HepG2 (cell line): ENCODE measurements at regions of chr5 and their contacts with region 1.

Region 1: DNA sequence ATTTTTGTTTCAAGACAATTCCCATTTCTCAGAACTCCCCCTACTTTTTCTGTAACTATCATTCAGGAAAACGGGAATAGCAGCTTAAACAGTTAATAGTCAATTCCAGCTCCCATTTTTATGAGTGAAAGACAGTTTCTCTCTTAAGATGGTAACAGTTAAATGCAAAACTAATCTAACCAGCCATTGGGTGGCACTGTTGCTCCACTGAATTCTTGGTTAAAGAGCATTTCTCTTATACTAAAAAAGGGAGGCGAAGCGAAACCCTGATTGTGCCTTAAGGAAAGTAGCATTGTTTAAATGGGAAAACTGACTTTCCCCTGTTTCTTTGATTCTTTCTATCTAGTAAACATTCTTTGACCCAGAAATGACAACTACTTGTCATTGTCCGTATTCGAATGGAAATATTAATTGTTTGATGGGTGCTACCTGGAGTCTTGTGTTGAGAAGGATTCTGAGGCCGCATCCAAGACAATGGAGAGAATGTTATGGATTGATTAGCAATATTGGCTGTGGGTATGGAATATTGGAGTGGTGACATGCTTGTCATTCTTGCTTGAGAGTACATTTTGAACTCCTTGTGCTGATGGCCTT is 507.8 kb downstream of the MAT2B start:
- DNase-seq: peak; percentile 45
- ATAC-seq: peak; percentile 68; the same call in 2 of the 3 replicates
- H3K4me3 ChIP-seq: no peak overlapping the region
- H3K27ac ChIP-seq: no peak overlapping the region
- H3K4me1 ChIP-seq: no peaks in the 10 kb centered on the region
- H3K27me3 ChIP-seq: no peaks in the 10 kb centered on the region
- CTCF ChIP-seq: peak; percentile 73
- EP300 ChIP-seq: no peak
- POLR2A ChIP-seq: no peak
- RAD21 ChIP-seq: 0 out of 2 replicates have a peak, but pooled peaks have one; percentile 29

Region 2: DNA sequence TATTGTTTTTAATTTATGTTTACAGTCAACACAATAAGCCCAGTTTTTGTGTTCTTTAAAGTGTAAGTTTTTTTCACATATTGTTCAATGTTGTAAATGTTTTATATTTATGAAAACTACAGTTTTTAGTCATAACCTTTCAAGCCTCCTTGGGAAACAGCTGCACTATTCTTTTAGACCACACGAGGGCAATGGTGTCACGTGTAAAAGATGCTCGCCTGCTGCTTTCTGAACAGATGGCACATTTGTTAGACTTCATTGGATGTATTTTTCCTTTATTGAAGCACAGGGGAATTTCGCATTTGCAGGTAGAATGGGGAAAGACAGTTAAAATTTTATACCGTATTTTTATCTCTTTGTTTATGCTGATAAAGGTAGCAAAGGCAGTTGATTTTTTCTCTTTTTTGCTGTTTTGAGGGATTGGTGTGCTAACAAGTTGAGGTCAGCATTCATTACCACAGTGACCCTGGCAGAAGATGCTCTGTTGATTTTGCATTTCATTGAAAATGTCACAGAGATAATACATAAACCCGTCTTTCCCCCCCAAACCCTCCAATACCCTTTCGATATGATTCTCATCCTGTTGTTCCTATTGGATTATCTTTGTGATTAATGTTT is 448.7 kb before region 1 on chr5:
- CTCF ChIA-PET with region 1: no interaction called
- POLR2A ChIA-PET with region 1: no interaction called
- in situ Hi-C with region 1: loop called (anchors 10 kb)
- intact Hi-C with region 1: loop called (anchors 1 kb)
- DNase-seq: peak; percentile 50
- ATAC-seq: no peak
- H3K4me3 ChIP-seq: no peak overlapping the region
- H3K27ac ChIP-seq: no peak overlapping the region
- H3K4me1 ChIP-seq: peaks cover 32% of the 10 kb centered on the region
- H3K27me3 ChIP-seq: peaks cover 0 to 11% of the 10 kb centered on the region in 2 experiments; a peak in 1 of 5 replicates
- CTCF ChIP-seq: peak; percentile 83
- EP300 ChIP-seq: no peak
- POLR2A ChIP-seq: no peak
- RAD21 ChIP-seq: peak; percentile 49; the same call in 1 of the 2 replicates

Region 3: GRCh38 chr5:163967268-163967667 is 45.9 kb before region 1 on chr5:
- CTCF ChIA-PET with region 1: no interaction called
- POLR2A ChIA-PET with region 1: no interaction called
- in situ Hi-C with region 1: no loop called
- intact Hi-C with region 1: no loop called
- DNase-seq: no peak
- ATAC-seq: no peak
- H3K4me3 ChIP-seq: no peak overlapping the region
- H3K27ac ChIP-seq: no peak overlapping the region
- H3K4me1 ChIP-seq: no peaks in the 10 kb centered on the region
- H3K27me3 ChIP-seq: no peaks in the 10 kb centered on the region
- CTCF ChIP-seq: no peak
- EP300 ChIP-seq: no peak
- POLR2A ChIP-seq: no peak
- RAD21 ChIP-seq: no peak

Region 4: DNA sequence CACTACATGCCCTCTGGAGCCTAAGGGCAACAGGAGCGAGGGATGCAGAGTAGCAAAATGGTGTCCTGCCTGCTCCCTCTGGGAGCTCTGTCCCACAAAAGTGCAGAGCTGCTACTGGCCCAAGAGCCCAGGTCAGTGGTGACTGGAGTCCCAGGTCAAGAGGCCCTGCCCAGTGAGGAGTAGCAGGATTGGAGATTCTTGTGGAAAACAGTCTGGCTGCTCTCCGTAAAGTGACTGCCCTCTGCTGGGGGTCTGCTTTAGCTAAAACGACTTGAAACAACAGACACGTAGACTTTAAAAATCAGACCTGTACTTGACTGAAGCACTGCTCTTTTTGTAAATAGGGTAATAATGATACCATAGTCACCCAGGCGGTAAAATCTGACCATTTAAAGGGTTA is 409.2 kb after region 1 on chr5:
- CTCF ChIA-PET with region 1: no interaction called
- POLR2A ChIA-PET with region 1: no interaction called
- in situ Hi-C with region 1: no loop called
- intact Hi-C with region 1: loop called (anchors 1 kb)
- DNase-seq: peak; percentile 22
- ATAC-seq: no peak; the same call in 2 of the 3 replicates
- H3K4me3 ChIP-seq: no peak overlapping the region
- H3K27ac ChIP-seq: no peak overlapping the region
- H3K4me1 ChIP-seq: no peaks in the 10 kb centered on the region
- H3K27me3 ChIP-seq: no peaks in the 10 kb centered on the region
- CTCF ChIP-seq: no peak
- EP300 ChIP-seq: no peak
- POLR2A ChIP-seq: no peak
- RAD21 ChIP-seq: no peak

Region 5: DNA sequence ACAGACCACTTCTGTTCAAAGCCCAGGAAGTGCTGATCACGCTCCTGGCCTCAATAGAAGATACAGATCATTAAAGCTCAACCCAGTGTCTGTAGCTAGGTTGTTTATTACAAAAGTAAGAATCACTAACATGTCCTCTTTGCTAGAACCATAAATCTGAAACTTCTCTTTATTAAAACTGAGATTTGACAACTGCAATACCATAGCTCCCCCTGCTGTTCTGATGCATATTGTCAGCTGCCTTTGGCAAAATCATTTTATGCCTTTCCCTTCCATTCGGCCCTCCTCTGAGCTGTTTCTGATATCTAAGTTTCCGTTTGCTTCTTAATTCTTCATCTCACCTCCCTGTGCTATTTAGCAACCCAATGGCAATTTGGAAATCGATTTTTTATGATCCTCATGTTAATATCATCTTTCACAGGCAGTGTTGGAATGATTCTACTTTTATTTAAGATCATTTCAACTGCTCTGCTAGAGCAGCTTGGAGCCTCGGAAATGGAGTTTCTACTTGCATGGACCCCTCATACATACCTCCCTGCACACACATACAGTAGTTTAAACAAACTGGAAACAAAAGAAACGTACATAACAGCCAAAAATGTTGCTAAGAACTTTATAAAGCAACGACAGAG is 491.1 kb after region 1 on chr5:
- CTCF ChIA-PET with region 1: interaction called, 19 read pairs
- POLR2A ChIA-PET with region 1: no interaction called
- in situ Hi-C with region 1: loop called (anchors 25 kb)
- intact Hi-C with region 1: no loop called
- DNase-seq: peak; percentile 34
- ATAC-seq: peak; percentile 47; the same call in 1 of the 3 replicates
- H3K4me3 ChIP-seq: no peak overlapping the region
- H3K27ac ChIP-seq: no peak overlapping the region
- H3K4me1 ChIP-seq: no peaks in the 10 kb centered on the region
- H3K27me3 ChIP-seq: no peaks in the 10 kb centered on the region
- CTCF ChIP-seq: peak; percentile 72
- EP300 ChIP-seq: no peak
- POLR2A ChIP-seq: no peak
- RAD21 ChIP-seq: 0 out of 2 replicates have a peak, but pooled peaks have one; percentile 32

Region 6: GRCh38 chr5:164610374-164610773 is 597.2 kb after region 1 on chr5:
- CTCF ChIA-PET with region 1: no interaction called
- POLR2A ChIA-PET with region 1: no interaction called
- in situ Hi-C with region 1: no loop called
- intact Hi-C with region 1: no loop called
- DNase-seq: no peak
- ATAC-seq: no peak
- H3K4me3 ChIP-seq: no peak overlapping the region
- H3K27ac ChIP-seq: no peak overlapping the region
- H3K4me1 ChIP-seq: no peaks in the 10 kb centered on the region
- H3K27me3 ChIP-seq: no peaks in the 10 kb centered on the region
- CTCF ChIP-seq: no peak
- EP300 ChIP-seq: no peak
- POLR2A ChIP-seq: no peak
- RAD21 ChIP-seq: no peak

Region 7: DNA sequence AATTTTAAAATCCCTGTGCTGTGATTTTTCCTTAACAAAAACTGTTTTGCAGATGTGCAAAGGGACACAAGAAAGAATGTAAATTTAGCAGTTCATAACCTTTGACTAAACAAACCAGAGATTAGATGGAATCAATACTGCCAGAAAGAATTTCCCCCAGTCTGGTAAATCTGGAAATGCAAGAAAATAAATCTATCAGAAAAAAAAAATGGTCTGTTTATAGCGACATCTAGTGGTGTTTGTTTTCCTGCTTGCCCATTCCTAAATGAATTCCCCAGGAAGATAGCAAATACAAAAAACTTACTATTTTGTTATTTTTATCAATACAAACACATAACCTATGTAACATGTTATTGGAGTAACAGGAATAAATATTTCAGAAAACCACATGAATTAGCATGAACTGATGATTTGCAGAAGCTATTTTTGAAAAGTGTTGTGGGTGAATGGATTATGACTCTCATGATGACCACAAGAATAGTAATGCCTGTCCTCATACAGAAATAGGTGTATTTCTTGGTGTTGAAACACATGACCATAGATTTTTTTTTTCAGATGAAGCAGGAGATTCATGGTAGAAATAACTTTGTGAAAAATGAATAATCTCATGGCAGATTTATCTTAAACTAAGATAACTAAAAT is 1196.0 kb after region 1 on chr5:
- CTCF ChIA-PET with region 1: interaction called, 4 read pairs
- POLR2A ChIA-PET with region 1: no interaction called
- in situ Hi-C with region 1: loop called (anchors 25 kb)
- intact Hi-C with region 1: no loop called
- DNase-seq: peak; percentile 3
- ATAC-seq: no peak
- H3K4me3 ChIP-seq: no peak overlapping the region
- H3K27ac ChIP-seq: no peak overlapping the region
- H3K4me1 ChIP-seq: no peaks in the 10 kb centered on the region
- H3K27me3 ChIP-seq: no peaks in the 10 kb centered on the region
- CTCF ChIP-seq: peak; percentile 41
- EP300 ChIP-seq: no peak
- POLR2A ChIP-seq: no peak
- RAD21 ChIP-seq: no peak